ENCODE measurements at regions of chr5 and their contacts with region 1.

Region 1: DNA sequence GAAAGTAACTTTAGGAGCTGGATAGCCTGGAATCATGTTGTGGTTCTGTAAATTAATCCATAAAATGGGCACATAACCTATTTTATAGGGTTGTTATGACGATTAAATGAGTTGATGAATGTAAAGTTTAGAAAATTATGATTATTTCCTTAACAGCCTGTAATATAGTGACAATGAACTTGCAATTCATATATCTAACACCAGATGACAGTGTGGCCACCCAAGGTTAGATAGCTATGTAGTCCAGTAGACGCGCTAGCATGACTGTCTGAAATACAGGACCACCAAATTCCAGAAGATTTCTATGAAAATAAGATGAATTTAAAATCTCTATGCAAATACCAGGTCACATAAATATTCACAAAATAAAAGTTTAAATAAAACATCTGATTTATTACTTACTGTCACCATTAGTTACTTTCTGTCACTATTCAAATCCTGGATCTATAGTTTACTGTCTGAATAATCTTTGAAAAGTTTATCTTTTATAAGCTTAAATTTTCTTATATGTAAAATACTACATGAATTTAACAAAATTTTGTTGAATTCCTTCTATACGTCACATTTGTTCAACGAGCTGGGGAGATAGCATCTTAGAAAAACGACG is 26.1 kb upstream of the MACIR start:
- DNase-seq: peak; percentile 41 to 54
- H3K4me3 ChIP-seq: no peak overlapping the region
- H3K4me1 ChIP-seq: no peaks in the 10 kb centered on the region
- H3K27me3 ChIP-seq: no peaks in the 10 kb centered on the region

Region 2: GRCh38 chr5:102937916-102938315 is 294.6 kb before region 1 on chr5:
- in situ Hi-C with region 1: no loop called
- DNase-seq: no peak
- H3K4me3 ChIP-seq: no peak overlapping the region
- H3K4me1 ChIP-seq: no peaks in the 10 kb centered on the region; the same call in 1 of the 2 replicates
- H3K27me3 ChIP-seq: no peaks in the 10 kb centered on the region

Region 3: GRCh38 chr5:103424453-103425205 is 192.1 kb after region 1 on chr5:
- in situ Hi-C with region 1: no loop called
- DNase-seq: no peak
- H3K4me3 ChIP-seq: no peak overlapping the region
- H3K4me1 ChIP-seq: no peaks in the 10 kb centered on the region
- H3K27me3 ChIP-seq: no peaks in the 10 kb centered on the region

Region 4: DNA sequence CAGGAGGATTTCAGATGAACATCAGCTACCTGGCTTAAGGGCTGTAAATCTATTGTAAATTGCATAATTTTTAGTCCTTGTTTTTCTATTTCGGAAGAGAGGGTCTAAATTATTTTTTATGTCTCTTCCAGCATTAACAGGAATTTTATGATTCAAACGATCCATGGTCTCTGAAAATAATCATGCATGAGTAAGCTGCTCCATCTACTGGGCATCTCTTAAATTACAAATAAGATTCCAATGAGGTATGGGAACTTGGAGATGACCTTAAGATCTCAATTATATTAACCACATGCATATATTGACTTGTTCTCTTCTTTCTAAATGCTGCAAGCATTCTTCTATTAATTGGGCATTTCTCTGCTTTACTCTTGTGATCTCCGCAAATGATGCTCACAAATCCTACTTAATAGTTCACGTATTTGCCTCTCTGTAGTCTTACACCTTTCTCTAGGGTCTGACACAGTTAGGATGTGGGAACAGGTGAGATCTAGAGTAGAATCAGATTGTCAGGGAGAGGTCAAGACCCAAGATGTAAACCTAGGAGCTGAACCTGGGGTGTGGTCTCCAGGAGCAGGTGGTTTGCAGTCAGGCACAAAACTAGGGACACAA is 243.2 kb after region 1 on chr5:
- in situ Hi-C with region 1: loop called (anchors 10 kb)
- DNase-seq: peak in 1 of 2 experiments; percentile 57
- H3K4me3 ChIP-seq: no peak overlapping the region
- H3K4me1 ChIP-seq: no peaks in the 10 kb centered on the region
- H3K27me3 ChIP-seq: peaks cover 4% of the 10 kb centered on the region; the same call in 1 of the 2 replicates

Region 5: DNA sequence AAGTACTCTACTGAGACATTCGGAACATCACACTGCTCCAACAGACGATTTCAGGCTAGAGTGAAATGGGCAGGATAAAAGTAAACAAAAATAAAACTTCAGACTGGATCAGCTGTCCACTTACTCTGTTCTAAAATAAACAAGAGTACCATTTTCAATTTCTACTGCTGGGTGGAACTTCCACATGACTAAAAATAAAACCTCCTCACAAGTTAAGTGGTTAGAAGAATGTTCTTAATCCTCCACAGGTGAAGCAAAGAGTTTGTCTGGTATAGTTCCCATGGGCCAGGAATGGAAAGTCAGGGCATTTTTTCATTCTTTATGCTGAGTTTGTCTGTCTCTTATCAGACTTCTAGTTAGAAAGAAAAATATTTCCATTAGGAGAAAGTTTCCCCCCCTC is 314.4 kb after region 1 on chr5:
- in situ Hi-C with region 1: no loop called
- DNase-seq: no peak
- H3K4me3 ChIP-seq: no peak overlapping the region
- H3K4me1 ChIP-seq: no peaks in the 10 kb centered on the region
- H3K27me3 ChIP-seq: no peaks in the 10 kb centered on the region

Measured in HAP-1 (cell line).